ENCODE measurements at regions of chr17 and their contacts with region 1.

Region 1: DNA sequence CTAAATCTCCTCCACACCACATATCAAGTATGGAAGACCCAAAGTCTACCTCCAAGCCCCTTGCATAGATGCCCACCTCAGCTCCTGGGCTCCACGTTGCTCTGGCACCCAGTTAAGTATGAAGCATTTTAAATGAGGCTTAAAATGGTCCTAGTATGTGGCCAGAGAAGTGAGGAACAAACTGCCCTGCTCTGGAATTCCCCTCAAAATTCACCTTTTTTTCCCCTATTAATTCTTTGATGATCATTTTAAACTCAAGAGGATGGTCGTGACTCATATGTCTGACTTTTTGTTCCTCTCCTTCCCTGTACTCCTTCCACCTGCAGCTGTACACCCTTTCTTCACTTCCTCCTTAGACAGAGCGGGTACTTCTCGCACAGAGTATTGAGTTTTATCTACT is 234.5 kb upstream of the MYOCD start:
- DNase-seq: no peak
- ATAC-seq: no peak
- H3K4me3 ChIP-seq: no peak overlapping the region
- H3K27ac ChIP-seq: no peak overlapping the region
- H3K4me1 ChIP-seq: peaks cover 3% of the 10 kb centered on the region; the same call in 1 of the 2 replicates
- H3K27me3 ChIP-seq: no peaks in the 10 kb centered on the region
- CTCF ChIP-seq: no peak
- POLR2A ChIP-seq: no peak
- RAD21 ChIP-seq: no peak

Region 2: GRCh38 chr17:12459736-12460135 is 28.5 kb after region 1 on chr17:
- CTCF ChIA-PET with region 1: no interaction called
- POLR2A ChIA-PET with region 1: no interaction called
- dilution Hi-C with region 1: no loop called
- in situ Hi-C with region 1: no loop called
- intact Hi-C with region 1: loop called (anchors 1 kb)
- DNase-seq: no peak
- ATAC-seq: no peak
- H3K4me3 ChIP-seq: no peak overlapping the region
- H3K27ac ChIP-seq: no peak overlapping the region
- H3K4me1 ChIP-seq: peaks cover 10% of the 10 kb centered on the region
- H3K27me3 ChIP-seq: no peaks in the 10 kb centered on the region
- CTCF ChIP-seq: no peak
- POLR2A ChIP-seq: no peak
- RAD21 ChIP-seq: no peak

Region 3: DNA sequence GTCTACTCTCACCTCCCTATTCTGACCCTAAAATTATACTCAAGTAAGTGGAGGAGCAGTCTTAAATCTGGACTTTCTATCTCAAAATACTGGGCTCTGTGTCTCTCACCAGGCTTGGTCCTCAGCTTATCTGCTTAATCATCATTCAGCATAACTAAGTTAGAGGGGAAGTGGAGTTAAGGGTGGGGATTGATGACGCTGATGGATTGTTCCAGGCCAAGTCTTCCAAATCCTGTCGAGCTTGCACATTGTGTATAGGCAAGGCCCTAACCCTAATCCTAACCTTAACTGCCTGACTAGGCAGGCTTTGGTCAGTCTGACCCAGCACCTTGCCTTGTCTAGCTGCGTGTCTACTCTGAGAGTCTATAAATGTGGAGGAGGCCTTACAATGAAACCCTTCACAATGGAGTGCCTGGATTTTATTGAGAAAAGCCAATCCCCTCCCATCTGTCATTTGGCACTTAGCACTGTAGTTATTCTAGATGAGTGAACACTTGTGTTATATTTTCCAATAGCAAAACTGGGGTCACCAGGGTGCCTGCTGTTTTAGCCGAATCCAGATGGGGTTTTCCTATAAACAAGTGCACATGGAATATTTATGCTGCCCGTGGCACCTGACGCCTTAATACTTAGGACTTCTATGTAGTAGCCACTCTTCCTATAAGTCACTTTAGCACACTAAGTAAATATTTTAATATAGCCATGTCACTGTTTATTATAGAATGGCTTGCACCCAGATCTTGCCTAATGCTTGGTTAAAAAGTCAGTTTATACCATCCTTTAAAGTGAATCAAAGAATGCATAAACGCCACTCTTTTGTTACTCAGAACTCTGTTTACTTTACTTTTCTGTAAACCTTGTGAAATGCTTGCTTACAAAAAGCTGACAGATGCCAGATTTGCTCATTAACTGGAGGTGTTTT is 41.3 kb after region 1 on chr17:
- CTCF ChIA-PET with region 1: no interaction called
- POLR2A ChIA-PET with region 1: no interaction called
- dilution Hi-C with region 1: no loop called
- in situ Hi-C with region 1: no loop called
- intact Hi-C with region 1: loop called (anchors 1 kb)
- DNase-seq: peak; percentile 71
- ATAC-seq: peak; percentile 88
- H3K4me3 ChIP-seq: no peak overlapping the region
- H3K27ac ChIP-seq: peak overlapping the region; percentile 71
- H3K4me1 ChIP-seq: peaks cover 8% of the 10 kb centered on the region
- H3K27me3 ChIP-seq: no peaks in the 10 kb centered on the region
- CTCF ChIP-seq: no peak
- POLR2A ChIP-seq: no peak
- RAD21 ChIP-seq: no peak

Region 4: DNA sequence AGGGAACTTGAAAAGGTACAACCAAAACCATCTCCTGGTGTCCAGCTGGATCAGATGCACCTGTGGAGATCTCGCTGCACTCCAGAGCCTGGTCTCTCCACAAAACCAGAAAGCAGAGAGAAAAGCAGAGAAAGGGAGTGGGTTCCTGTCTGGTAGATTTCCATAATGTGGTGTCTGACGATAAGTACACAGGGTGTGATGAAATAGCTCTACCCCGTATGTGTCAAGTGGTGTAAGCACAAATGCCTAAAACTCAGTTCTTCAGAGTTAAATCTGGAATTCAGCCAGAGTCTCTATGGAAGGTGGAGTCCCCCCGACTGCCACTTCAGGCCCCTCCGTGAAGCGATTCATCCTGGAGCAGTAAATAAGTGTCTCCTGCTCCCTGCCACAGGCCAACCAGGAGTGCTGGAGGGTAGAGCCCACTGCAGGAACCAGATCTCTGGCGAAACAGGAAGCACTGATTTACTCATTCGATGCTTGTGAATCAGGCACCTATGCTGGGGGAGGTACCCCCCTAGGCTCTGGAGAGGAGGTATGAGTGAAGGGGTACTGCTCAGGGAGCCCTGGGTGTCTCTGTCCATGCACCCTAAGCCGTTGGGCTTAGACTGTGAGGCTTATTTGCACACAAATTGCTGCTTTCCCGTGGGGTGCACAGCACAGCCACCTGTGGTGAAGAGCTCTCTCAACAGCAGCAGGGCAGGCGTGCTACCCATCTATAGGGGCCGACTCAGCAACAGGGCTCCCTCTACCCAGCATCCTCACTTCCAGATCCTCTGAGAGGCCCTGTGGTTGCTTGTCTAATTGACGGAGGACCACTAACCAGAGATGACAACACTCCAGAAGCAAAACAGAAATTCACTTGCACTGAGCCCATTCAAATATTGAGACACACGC is 137.4 kb after region 1 on chr17:
- CTCF ChIA-PET with region 1: no interaction called
- POLR2A ChIA-PET with region 1: no interaction called
- dilution Hi-C with region 1: no loop called
- in situ Hi-C with region 1: no loop called
- intact Hi-C with region 1: no loop called
- DNase-seq: no peak
- ATAC-seq: no peak; the same call in 1 of the 2 replicates
- H3K4me3 ChIP-seq: no peak overlapping the region
- H3K27ac ChIP-seq: no peak overlapping the region
- H3K4me1 ChIP-seq: peaks cover 8% of the 10 kb centered on the region
- H3K27me3 ChIP-seq: no peaks in the 10 kb centered on the region
- CTCF ChIP-seq: no peak
- POLR2A ChIP-seq: no peak
- RAD21 ChIP-seq: no peak

Measured in IMR-90 (cell line).